ENCODE measurements at regions of chr1 and their contacts with region 1.

Region 1: DNA sequence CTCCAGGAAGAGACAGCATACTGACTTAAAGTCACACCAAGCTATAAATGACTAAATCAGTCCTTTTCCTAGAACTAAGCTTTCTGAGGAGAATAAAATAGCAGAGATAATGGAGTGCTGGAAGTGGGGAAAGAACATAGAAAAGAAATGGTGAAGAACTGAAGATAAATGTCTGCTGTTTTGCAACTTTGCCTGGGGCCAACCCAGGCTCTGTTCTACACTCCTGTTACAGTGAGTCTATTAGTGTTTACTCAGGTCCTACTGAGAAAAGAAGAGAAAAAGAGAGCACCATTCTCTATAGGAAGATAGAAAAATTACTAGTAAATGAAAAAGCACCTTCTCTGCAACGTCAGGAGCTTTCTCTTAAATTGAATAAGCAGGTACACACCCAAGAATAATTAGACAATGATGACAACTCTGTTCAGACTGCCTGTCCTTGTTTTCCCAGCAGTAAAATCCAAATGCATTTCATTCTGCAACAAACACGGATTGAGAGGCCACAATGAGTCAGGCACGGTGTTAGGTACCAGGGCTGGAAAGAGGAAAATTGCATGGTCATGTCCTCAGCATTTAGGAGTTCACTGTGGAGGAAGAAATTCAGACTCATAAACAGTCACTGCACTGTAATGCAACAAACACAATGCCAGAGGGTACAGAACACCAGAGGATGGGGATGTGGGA is 139.4 kb upstream of the CAMK1G start:
- DNase-seq: no peak
- ATAC-seq: no peak
- H3K4me3 ChIP-seq: no peak overlapping the region
- H3K27ac ChIP-seq: no peak overlapping the region
- H3K4me1 ChIP-seq: no peaks in the 10 kb centered on the region
- H3K27me3 ChIP-seq: peaks cover 14% of the 10 kb centered on the region; the same call in 1 of the 2 replicates
- CTCF ChIP-seq: no peak
- POLR2A ChIP-seq: no peak
- RAD21 ChIP-seq: no peak

Region 2: DNA sequence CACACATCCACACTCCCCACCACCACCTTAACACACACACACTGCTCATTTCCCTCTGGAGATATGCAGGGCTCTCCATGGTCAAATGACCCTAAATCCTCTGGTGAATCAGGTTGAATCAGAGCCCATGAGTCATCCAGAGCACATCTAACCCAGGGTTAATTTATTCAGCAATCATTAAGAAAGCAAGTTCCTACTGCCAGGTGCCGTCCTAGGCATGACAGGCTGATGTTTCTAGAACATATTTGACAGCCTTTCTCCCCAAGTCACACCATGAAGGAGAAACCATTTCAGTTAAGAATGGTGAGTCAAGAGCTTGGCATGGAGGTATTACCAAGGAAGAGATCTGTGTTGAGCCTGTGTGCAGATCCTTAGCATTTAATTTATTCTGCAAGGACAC is 54.9 kb before region 1 on chr1:
- CTCF ChIA-PET with region 1: no interaction called
- POLR2A ChIA-PET with region 1: no interaction called
- RAD21 ChIA-PET with region 1: no interaction called
- intact Hi-C with region 1: loop called (anchors 10 kb)
- DNase-seq: peak; percentile 72
- ATAC-seq: peak; percentile 84
- H3K4me3 ChIP-seq: no peak overlapping the region
- H3K27ac ChIP-seq: no peak overlapping the region
- H3K4me1 ChIP-seq: peaks cover 0 to 29% of the 10 kb centered on the region in 2 experiments; a peak in 2 of 4 replicates
- H3K27me3 ChIP-seq: no peaks in the 10 kb centered on the region
- CTCF ChIP-seq: no peak
- POLR2A ChIP-seq: no peak
- RAD21 ChIP-seq: peak; percentile 18; the same call in 1 of the 2 replicates

Measured in HCT116 (cell line).